Dendritic cell treated with granulocyte-macrophage colony-stimulating factor and Interleukin-4, amounts not matched to agents 40 ng/mL and 50 ng/mL, for 4 days (primary cell): ENCODE measurements at regions of chr19 and their contacts with region 1.

Region 1: DNA sequence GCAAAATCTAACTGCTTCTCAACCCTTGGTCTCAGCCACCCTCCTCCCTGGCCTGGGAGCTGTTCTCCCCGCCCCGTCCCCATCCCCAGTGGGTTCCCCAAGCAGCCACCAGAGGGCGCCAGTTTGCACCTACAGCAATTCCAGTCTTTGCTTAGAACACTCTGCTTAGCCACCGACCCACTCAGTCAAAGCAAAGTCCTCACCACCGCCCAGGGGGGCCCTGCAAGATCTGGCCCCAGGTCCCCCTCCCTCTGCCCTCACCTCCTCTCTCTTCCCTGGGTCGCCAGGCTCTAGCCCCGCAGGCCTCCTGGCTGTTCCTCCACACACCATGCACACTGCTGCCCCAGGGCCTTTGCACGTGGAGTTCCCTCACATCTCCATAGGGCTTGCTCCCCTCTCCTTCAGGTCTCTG is 12.4 kb downstream of the TMEM143 start:
- H3K4me3 Mint-ChIP-seq: no peak overlapping the region
- H3K27ac Mint-ChIP-seq: no peak overlapping the region
- H3K4me1 Mint-ChIP-seq: peaks cover 8% of the 10 kb centered on the region
- H3K27me3 Mint-ChIP-seq: no peaks in the 10 kb centered on the region

Region 2: DNA sequence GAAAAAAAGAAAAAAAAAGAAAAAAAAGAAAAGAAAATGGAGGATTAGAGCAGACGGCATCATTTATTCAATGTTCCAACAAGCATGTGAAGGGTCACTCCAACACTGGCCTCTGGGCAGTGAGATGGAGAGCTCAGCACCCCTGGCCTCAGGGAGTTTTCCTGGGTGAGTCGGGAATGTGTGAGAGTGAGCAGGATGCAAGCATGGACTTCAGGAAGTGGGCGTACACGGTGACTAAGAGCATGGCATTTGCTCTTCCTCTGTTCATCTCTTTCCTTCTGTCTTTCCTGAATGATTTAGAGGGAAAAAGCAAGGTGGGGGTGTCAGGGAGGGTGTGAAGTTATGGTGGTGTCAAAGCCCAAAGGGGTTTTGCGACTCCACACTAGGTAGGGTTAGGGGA is 306.8 kb before region 1 on chr19:
- intact Hi-C with region 1: no loop called
- H3K4me3 Mint-ChIP-seq: no peak overlapping the region
- H3K27ac Mint-ChIP-seq: no peak overlapping the region
- H3K4me1 Mint-ChIP-seq: no peaks in the 10 kb centered on the region
- H3K27me3 Mint-ChIP-seq: peaks cover 8% of the 10 kb centered on the region

Region 3: DNA sequence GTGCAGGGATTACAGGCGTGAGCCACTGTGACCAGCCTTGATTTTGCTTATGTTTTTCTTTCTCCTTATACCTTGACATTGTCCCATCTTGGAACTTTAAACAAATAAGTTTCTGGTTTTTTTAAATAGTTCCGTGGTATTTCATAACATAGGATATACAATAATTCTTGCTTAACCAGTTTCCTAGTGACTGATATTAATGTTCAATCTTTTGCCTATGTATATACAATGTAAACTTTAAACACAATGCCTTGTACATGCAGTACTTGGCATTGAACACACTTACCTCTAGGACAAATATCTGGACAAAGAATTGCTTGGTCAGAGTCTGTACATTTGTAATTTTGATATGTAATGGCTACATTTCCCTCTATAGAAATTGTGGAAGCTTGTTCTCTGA is 230.8 kb after region 1 on chr19:
- intact Hi-C with region 1: loop called (anchors 5 kb)
- H3K4me3 Mint-ChIP-seq: no peak overlapping the region
- H3K27ac Mint-ChIP-seq: peak overlapping the region; percentile 88
- H3K4me1 Mint-ChIP-seq: peaks cover 24% of the 10 kb centered on the region
- H3K27me3 Mint-ChIP-seq: peaks cover 6% of the 10 kb centered on the region